ENCODE measurements at regions of chr2 and their contacts with region 1.

Region 1: DNA sequence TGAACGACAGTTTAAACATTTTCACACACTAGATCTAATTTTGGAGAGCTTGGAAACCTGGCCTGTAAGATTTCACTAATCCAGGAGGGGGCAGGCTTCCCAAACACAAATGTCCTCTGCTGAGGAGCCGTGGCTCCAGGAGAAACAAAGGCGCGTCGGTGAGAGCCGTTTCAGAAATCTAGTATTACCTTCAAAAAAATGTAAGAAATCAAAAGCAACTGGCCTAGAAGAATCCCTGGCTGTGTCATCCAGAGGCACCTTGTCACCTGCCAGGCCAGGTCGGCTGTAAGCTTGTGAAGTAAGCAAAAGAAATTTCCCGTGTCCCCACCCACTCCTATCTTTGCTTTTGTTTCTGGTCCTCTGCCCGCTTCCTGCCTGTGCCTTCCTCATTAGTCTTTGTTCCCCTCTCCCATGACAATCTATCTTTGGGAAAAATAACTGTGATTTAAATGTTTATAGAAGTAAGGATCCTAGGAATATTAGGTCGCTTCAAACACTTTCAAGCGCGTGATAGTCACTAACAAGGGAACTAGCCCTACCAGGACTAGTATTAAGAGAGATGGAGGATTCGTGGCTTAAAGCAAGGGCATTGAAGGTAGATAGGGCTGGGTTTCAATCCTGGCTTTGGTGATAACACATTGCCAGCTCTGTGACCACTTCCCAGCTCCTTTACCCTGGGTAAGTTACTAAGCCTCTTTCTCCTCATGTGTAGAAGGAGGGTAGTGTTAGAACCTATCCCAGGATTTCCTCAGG is 99.5 kb upstream of the STK39 start:
- DNase-seq: peak; percentile 55 to 71 (median 68)
- ATAC-seq: peak; percentile 72 to 91 (median 84)
- H3K4me3 ChIP-seq: peak overlapping the region in 11 of 12 donors; percentile 16 to 64 (median 52)
- H3K27ac ChIP-seq: peak overlapping the region in 5 of 12 donors; percentile 9 to 64 (median 27)
- H3K4me1 ChIP-seq: peaks cover 0 to 9% (median 0%) of the 10 kb centered on the region in 12 donors
- H3K27me3 ChIP-seq: peaks cover 0 to under 1% (median 0%) of the 10 kb centered on the region in 9 donors
- CTCF ChIP-seq: peak; percentile 72 to 87 (median 80)
- POLR2A ChIP-seq: no peak

Region 2: DNA sequence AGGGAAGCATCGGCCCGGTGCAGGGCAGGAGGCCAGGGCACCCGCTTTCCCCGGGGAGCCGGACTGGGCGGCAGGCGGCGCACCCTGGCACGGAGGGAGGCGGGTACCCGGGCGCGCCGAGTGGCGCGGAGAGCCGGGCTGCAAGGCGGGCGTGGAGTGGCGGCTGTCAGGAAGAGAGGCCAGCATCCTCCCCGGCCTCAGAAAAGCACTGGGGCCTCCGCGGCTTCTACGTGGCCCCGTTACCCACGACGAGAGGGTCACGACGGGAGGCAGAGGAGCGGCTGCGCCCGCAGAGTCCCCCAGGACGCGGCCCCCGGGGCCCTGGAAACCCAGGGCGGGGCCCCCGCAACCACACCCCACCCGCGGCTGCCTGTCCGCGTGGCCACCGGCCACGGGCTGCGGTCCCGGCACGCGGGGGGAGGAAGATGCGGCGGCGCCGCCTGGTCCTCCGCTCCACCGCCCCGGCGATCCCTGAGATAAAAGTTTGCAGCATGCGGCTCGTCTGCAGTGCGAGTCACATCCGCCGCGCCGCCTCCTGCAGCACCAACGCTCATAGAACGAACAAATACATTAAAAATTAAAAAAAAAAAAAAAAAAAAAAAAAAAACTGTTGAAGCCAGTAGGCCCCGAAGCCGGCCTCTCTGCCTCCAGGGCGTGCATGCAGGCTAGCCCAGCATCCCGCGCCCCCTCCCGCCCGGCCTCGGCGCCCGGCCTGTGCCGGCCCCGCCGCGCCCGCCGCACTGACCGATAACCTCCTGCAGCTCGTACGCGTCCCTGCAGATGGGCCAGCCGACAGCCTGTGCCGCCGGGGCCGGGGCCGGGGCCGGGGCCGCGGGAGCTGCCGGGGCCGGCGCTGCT is 100.2 kb before region 1 on chr2:
- intact Hi-C with region 1: no loop called
- DNase-seq: peak; percentile 69 to 87 (median 78)
- ATAC-seq: peak; percentile 52 to 86 (median 82)
- H3K4me3 ChIP-seq: peak overlapping the region; percentile 49 to 94 (median 80)
- H3K27ac ChIP-seq: peak overlapping the region; percentile 6 to 93 (median 88)
- H3K4me1 ChIP-seq: peaks cover 0 to 44% (median 27%) of the 10 kb centered on the region in 12 donors
- H3K27me3 ChIP-seq: no peaks in the 10 kb centered on the region
- CTCF ChIP-seq: peak in 9 of 12 donors; percentile 6 to 52 (median 40)
- POLR2A ChIP-seq: no peak

Region 3: GRCh38 chr2:168357797-168358472 is 11.0 kb after region 1 on chr2:
- intact Hi-C with region 1: no loop called
- DNase-seq: no peak
- ATAC-seq: no peak
- H3K4me3 ChIP-seq: no peak overlapping the region
- H3K27ac ChIP-seq: no peak overlapping the region
- H3K4me1 ChIP-seq: peaks cover 0 to 4% (median 0%) of the 10 kb centered on the region in 12 donors
- H3K27me3 ChIP-seq: no peaks in the 10 kb centered on the region
- CTCF ChIP-seq: no peak
- POLR2A ChIP-seq: no peak

Region 4: DNA sequence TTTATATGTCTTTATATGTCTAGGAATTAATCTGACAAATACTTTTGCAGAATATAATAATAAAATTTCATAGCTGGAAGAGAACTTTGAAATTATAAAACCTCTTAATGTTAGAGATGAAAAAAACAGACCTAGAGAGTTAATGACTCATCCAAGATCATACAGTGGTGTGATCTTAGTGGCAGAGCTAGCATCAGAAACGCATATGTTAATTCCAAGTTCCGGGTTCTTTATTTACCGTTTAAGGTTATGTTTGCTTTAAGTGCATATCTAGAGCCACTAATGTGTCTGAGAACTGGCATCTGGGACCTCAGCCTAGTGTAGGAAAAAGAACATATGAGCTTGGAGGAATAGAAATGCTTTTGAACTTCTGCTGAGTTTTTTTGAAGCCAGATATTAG is 133.5 kb after region 1 on chr2:
- intact Hi-C with region 1: no loop called
- DNase-seq: no peak
- ATAC-seq: no peak
- H3K4me3 ChIP-seq: no peak overlapping the region
- H3K27ac ChIP-seq: no peak overlapping the region
- H3K4me1 ChIP-seq: peaks cover 0 to 60% (median 7%) of the 10 kb centered on the region in 12 donors
- H3K27me3 ChIP-seq: no peaks in the 10 kb centered on the region
- CTCF ChIP-seq: no peak
- POLR2A ChIP-seq: no peak

Region 5: GRCh38 chr2:168518555-168519066 is 171.7 kb after region 1 on chr2:
- intact Hi-C with region 1: loop called in 1 of 10 experiments (anchors 10 kb)
- DNase-seq: peak in 3 of 5 donors; percentile 29 to 51 (median 39)
- ATAC-seq: peak; percentile 80 to 94 (median 90)
- H3K4me3 ChIP-seq: peak overlapping the region in 1 of 12 donors; percentile 9
- H3K27ac ChIP-seq: peak overlapping the region in 11 of 12 donors; percentile 21 to 78 (median 52)
- H3K4me1 ChIP-seq: peaks cover 0 to 66% (median 37%) of the 10 kb centered on the region in 12 donors
- H3K27me3 ChIP-seq: no peaks in the 10 kb centered on the region
- CTCF ChIP-seq: no peak
- POLR2A ChIP-seq: no peak

Region 6: DNA sequence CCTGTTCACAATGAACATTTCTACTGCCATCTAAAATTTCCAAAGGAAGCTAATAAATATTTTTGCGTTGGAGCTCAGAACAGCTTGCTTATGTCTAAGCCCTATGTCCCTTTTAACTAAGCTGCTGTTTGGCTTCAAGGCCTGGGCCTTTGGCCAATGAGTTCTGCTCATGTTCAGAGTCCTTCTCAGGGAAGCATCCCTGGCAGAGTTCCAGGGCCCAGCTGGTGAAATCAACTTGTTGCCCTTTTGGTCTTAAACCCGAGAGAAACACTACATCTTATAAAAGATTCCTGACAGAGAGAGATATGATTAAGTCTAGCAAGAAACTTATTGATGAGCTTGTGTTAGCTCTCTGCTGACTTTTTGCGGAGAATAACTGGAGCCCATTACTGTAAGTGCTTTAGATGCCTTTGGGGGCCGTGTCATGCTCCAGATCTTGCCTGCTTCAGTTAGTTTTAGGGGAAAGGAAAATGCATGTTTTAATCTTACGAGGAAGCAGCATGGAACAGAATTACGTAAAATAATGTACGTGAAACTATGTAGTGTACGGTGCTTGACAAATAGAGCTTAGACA is 353.0 kb after region 1 on chr2:
- intact Hi-C with region 1: loop called in 6 of 10 experiments (anchors 5 to 10 kb)
- DNase-seq: peak; percentile 80 to 93 (median 88)
- ATAC-seq: peak; percentile 57 to 75 (median 70)
- H3K4me3 ChIP-seq: no peak overlapping the region
- H3K27ac ChIP-seq: peak overlapping the region in 2 of 12 donors; percentile 31 to 63
- H3K4me1 ChIP-seq: peaks cover 0 to 27% (median 11%) of the 10 kb centered on the region in 12 donors
- H3K27me3 ChIP-seq: no peaks in the 10 kb centered on the region
- CTCF ChIP-seq: no peak
- POLR2A ChIP-seq: no peak

Region 7: DNA sequence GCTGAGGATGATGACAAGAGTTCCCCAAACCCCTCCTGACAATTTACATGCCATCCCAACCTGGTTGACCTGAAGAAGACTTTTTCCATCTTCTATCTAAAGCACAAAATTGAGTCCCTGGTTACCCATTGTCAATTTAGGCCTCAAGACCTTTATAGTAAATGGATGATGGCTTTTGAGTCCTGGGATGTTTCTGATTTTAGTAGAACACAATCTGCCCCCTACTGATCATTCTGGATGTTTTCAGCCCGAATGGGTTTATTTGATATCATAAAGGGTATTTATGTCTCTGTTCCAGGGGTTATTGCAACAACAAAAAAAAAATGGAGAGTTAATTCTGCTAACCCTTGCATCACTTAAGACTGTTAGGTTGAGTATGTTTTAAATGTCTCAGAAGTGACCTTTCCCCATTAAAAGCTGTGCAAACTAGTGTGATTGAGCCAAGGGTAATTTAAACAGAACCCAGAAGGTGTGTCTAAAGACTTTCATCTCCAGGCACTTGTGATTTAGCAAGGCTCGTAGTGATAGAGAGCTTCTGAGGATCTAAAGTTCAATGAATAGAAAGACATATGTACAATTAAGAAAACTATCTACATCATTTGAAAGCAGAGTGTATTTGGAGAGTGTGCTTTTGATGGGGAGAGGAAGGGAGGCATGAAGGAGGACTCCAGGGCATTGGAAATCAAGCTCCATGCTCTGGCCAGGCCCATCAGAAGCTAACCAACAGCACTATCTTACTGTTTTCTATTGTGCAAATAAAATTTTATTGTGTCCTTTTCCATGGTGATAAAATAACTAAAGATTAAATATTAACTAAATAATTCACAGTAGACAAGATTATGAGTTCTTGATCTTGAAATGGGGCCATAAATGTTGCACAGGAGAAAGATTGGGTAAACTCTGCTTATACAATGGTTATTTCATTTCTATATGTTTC is 358.9 kb after region 1 on chr2:
- intact Hi-C with region 1: loop called in 5 of 10 experiments (anchors 5 to 10 kb)
- DNase-seq: no peak
- ATAC-seq: peak in 1 of 4 donors; percentile 7
- H3K4me3 ChIP-seq: no peak overlapping the region
- H3K27ac ChIP-seq: no peak overlapping the region
- H3K4me1 ChIP-seq: peaks cover 0 to 13% (median 3%) of the 10 kb centered on the region in 12 donors
- H3K27me3 ChIP-seq: no peaks in the 10 kb centered on the region
- CTCF ChIP-seq: peak in 7 of 12 donors; percentile 15 to 43 (median 24)
- POLR2A ChIP-seq: no peak

Region 8: GRCh38 chr2:168758970-168759820 is 412.3 kb after region 1 on chr2:
- intact Hi-C with region 1: loop called (anchors 1 to 5 kb)
- DNase-seq: peak in 1 of 5 donors; percentile 21
- ATAC-seq: peak; percentile 52 to 83 (median 74)
- H3K4me3 ChIP-seq: no peak overlapping the region
- H3K27ac ChIP-seq: no peak overlapping the region
- H3K4me1 ChIP-seq: peaks cover 0 to 35% (median 14%) of the 10 kb centered on the region in 12 donors
- H3K27me3 ChIP-seq: no peaks in the 10 kb centered on the region
- CTCF ChIP-seq: peak; percentile 42 to 73 (median 61)
- POLR2A ChIP-seq: no peak

Region 9: DNA sequence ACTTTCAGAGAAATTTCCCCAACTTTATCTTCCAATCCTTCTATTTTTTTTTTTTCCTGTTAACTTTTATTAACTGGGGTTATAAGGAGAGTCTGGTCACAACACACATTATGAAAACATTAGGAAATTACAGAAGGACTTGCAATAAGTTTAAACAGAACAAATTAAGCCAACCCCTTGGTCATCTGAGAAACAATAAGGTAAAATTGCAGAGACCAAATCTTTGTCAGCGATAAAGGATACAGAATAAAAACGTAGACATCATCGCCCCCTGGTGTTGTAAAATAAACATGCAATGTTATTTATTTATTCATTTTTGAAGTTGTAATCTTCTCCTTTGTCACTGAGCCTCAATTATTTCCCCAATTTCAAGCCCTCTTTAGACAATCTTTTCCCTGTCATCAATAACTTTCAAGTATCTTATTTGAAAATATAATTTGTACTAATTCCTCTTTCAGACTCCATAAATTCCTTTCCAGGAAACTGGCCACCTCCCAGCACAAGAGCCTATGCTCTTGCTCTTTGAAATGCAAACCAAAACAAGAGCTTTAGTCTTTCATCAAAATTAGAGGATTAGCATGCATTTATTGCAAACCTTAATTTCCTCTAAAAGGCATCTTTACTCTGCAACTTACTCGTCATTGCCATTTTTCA is 573.7 kb after region 1 on chr2:
- intact Hi-C with region 1: loop called (anchors 1 to 5 kb)
- DNase-seq: no peak
- ATAC-seq: no peak
- H3K4me3 ChIP-seq: no peak overlapping the region
- H3K27ac ChIP-seq: no peak overlapping the region
- H3K4me1 ChIP-seq: no peaks in the 10 kb centered on the region
- H3K27me3 ChIP-seq: peaks cover 0 to under 1% (median 0%) of the 10 kb centered on the region in 9 donors
- CTCF ChIP-seq: peak; percentile 44 to 73 (median 67)
- POLR2A ChIP-seq: no peak